CD14-positive monocyte (primary cell): ENCODE measurements at regions of chr1 and their contacts with region 1.

Region 1: DNA sequence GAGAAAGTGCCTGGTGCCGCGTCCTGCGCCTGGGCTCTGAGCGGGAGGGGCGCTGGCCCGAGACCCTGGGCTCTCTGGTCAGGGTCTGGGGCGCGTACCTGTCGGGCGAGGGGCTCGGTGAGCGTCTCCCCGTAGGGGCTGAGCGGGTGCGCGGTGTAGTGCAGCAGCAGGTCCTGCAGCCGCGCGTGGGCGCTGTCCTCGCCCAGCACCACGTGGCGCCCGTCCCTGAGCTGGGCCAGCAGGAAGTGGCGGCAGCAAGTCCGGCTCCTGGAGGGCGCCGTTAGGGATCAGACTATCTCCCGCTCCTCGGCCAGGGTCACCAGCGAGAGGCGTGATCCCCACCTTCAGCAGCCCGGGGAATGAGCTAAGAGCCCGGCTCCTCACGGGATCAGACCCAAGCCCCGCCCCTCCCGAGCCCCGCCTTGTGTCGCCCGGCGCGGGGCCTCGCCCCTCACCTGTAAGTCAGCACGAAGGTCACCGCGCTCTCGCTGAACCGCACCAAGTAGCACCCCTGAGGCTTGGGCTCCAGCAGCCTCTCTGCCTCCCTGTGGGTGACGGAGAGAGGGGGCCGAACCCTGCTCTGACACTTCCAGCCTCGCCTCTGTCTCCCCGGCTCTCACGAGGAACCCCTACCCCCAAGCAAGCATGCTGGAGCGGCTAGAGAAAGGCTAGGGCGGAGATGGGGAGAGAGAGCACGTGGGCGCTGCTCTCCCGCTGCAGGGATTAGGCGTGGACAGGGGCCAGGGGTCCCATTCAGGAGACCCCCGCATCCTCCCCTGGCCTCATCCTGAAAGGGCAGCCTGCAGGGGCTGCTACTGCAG is 2.7 kb downstream of the SH2D2A start:
- DNase-seq: peak; percentile 56 to 70 (median 61)
- H3K4me3 ChIP-seq: peak overlapping the region; percentile 11 to 72 (median 47)
- H3K4me3 Mint-ChIP-seq: peak overlapping the region; percentile 78 to 87
- H3K27ac ChIP-seq: no peak overlapping the region
- H3K27ac Mint-ChIP-seq: peak overlapping the region in 2 of 7 donors; percentile 22 to 77
- H3K4me1 ChIP-seq: peaks cover 21 to 24% of the 10 kb centered on the region in 2 donors
- H3K4me1 Mint-ChIP-seq: peaks cover 28% of the 10 kb centered on the region
- H3K27me3 ChIP-seq: peaks cover 0 to 33% of the 10 kb centered on the region in 2 donors
- H3K27me3 Mint-ChIP-seq: peaks cover 33 to 63% (median 42%) of the 10 kb centered on the region in 3 donors
- CTCF ChIP-seq: peak; percentile 81

Region 2: GRCh38 chr1:156394835-156395461 is 419.0 kb before region 1 on chr1:
- intact Hi-C with region 1: no loop called
- DNase-seq: peak in 2 of 3 donors; percentile 16 to 30
- H3K4me3 ChIP-seq: no peak overlapping the region
- H3K4me3 Mint-ChIP-seq: no peak overlapping the region
- H3K27ac ChIP-seq: no peak overlapping the region
- H3K27ac Mint-ChIP-seq: peak overlapping the region in 2 of 7 donors; percentile 16 to 38
- H3K4me1 ChIP-seq: peaks cover 0 to 6% of the 10 kb centered on the region in 2 donors
- H3K4me1 Mint-ChIP-seq: peaks cover 10% of the 10 kb centered on the region
- H3K27me3 ChIP-seq: peaks cover 0 to 13% of the 10 kb centered on the region in 2 donors
- H3K27me3 Mint-ChIP-seq: peaks cover 15 to 31% (median 21%) of the 10 kb centered on the region in 3 donors
- CTCF ChIP-seq: peak; percentile 25

Region 3: GRCh38 chr1:156892190-156893047 is 78.5 kb after region 1 on chr1:
- intact Hi-C with region 1: loop called in 1 of 2 experiments (anchors 10 kb)
- DNase-seq: peak; percentile 79 to 91 (median 80)
- H3K4me3 ChIP-seq: peak overlapping the region; percentile 7 to 74 (median 17)
- H3K4me3 Mint-ChIP-seq: peak overlapping the region; percentile 73 to 87
- H3K27ac ChIP-seq: no peak overlapping the region
- H3K27ac Mint-ChIP-seq: peak overlapping the region in 3 of 7 donors; percentile 19 to 54 (median 48)
- H3K4me1 ChIP-seq: peaks cover 20 to 24% of the 10 kb centered on the region in 2 donors
- H3K4me1 Mint-ChIP-seq: peaks cover 20% of the 10 kb centered on the region
- H3K27me3 ChIP-seq: peaks cover 20 to 47% of the 10 kb centered on the region in 2 donors
- H3K27me3 Mint-ChIP-seq: peaks cover 53 to 68% (median 56%) of the 10 kb centered on the region in 3 donors
- CTCF ChIP-seq: peak; percentile 74